ENCODE measurements at regions of chr1 and their contacts with region 1.

Region 1: DNA sequence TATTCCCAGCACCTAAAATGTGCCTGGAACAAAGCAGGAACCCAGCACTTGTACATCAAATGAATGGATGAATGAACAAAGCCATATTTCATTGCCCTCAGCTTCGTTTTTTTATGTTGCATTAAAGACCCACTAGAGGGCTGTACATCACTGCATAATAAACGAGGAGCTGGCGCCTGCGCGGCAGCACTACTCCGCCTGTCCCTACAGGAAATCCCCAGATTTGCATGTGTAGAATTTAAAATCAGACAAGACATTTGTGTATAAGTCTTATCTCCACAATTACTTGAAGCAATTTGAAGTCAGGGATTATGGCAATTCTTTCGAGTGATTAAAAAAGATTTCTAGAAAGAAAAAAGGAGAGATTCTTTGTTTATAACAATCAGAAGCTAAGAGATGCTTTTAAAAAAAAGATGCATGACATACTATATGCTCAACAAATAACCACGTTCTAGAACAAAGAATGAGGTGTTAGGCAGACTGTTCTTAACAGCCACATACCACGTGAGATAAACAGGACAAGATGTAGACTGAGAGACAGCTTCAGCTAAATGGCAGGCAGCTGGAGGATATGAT is 5.4 kb upstream of the NEK2 start:
- DNase-seq: peak; percentile 63 to 86 (median 82)
- ATAC-seq: peak; percentile 89 to 90
- H3K4me3 ChIP-seq: no peak overlapping the region
- H3K27ac ChIP-seq: no peak overlapping the region
- H3K4me1 ChIP-seq: no peaks in the 10 kb centered on the region
- H3K27me3 ChIP-seq: no peaks in the 10 kb centered on the region

Region 2: GRCh38 chr1:211578640-211579433 is 102.0 kb before region 1 on chr1 and contains the start of gene SLC30A1:
- intact Hi-C with region 1: no loop called
- DNase-seq: peak; percentile 100
- ATAC-seq: peak; percentile 97 to 98
- H3K4me3 ChIP-seq: peak within 1 kb of the TSS; percentile 80
- H3K27ac ChIP-seq: peak within 1 kb of the TSS; percentile 97
- H3K4me1 ChIP-seq: peaks cover 8% of the 10 kb centered on the region
- H3K27me3 ChIP-seq: no peaks in the 10 kb centered on the region
- total RNA-seq, gene SLC30A1: 14.5 to 19.2 (median 14.8) TPM

Region 3: DNA sequence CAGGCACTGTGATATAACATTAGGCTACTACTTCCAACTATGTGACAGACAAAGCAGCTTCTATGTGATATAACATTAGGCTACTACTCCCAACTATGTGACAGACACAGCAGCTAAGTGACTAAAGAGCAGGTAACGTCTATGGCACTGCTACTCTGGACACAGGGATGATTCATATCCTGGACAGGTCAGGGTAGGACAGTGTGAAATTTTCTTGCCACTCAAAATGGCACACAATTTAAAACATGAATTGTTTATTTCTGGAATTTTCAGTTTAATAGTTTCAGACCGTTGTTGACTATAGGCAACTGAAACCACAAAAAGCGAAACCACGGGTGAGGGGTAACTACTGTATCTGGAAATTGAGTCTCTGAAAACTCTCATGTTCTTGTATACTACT is 359.8 kb after region 1 on chr1:
- intact Hi-C with region 1: loop called in 1 of 4 experiments (anchors 5 kb)
- DNase-seq: no peak
- ATAC-seq: no peak
- H3K4me3 ChIP-seq: no peak overlapping the region
- H3K27ac ChIP-seq: no peak overlapping the region
- H3K4me1 ChIP-seq: no peaks in the 10 kb centered on the region
- H3K27me3 ChIP-seq: no peaks in the 10 kb centered on the region

Measured in right cardiac atrium (tissue), 5 donors.